ENCODE measurements at regions of chr9 and their contacts with region 1.

Region 1: GRCh38 chr9:70668751-70669150 is 254.3 kb upstream of the KLF9 start:
- DNase-seq: no peak
- H3K4me3 ChIP-seq: no peak overlapping the region
- H3K27ac ChIP-seq: no peak overlapping the region
- H3K4me1 ChIP-seq: no peaks in the 10 kb centered on the region
- H3K27me3 ChIP-seq: no peaks in the 10 kb centered on the region
- CTCF ChIP-seq: no peak

Region 2: DNA sequence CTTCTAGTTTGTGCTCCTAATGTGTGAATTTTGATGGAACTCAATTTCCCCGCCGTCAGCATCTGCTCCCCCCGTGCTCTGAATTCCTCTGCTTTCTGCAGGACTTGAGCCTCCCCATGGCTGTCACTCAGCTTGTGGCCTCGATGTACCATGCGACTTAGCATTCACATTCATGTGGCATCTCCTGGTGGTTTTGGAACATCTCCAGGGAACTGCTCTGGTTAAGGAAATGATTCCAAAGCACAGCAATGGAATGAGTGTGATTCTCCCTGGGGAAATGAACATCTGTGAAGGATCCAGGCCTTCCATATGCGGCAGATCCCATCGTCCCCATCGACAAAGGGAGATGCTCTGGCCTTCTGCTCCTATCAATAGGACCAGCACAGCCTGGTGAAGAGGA is 1224.7 kb before region 1 on chr9:
- CTCF ChIA-PET with region 1: no interaction called
- POLR2A ChIA-PET with region 1: no interaction called
- intact Hi-C with region 1: no loop called
- DNase-seq: no peak
- H3K4me3 ChIP-seq: no peak overlapping the region
- H3K27ac ChIP-seq: no peak overlapping the region
- H3K4me1 ChIP-seq: no peaks in the 10 kb centered on the region; the same call in 1 of the 2 replicates
- H3K27me3 ChIP-seq: no peaks in the 10 kb centered on the region
- CTCF ChIP-seq: no peak

Region 3: GRCh38 chr9:69672596-69673310 is 996.0 kb before region 1 on chr9:
- CTCF ChIA-PET with region 1: no interaction called
- POLR2A ChIA-PET with region 1: no interaction called
- intact Hi-C with region 1: no loop called
- DNase-seq: peak; percentile 73 to 80
- H3K4me3 ChIP-seq: peak overlapping the region; percentile 76
- H3K27ac ChIP-seq: no peak overlapping the region
- H3K4me1 ChIP-seq: peaks cover 32% of the 10 kb centered on the region
- H3K27me3 ChIP-seq: no peaks in the 10 kb centered on the region
- CTCF ChIP-seq: peak; percentile 84

Region 4: DNA sequence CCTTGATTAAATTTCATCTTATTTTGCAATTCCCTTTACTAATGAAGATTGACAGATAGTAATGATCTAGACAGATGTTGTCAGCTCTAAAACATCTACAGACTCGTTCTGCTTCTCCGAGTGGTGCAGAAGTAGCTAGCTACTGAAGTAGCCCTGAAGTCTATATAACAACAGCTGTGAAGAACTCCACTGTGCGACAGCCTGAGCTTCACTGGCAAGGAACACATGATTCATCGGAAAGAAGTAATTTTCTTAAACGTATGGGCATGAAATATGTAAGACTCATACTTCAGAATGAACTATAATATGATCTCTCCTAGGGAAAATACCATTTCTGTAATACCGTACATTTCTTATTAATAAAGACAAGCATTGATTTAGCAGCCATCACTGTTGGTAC is 356.4 kb after region 1 on chr9:
- CTCF ChIA-PET with region 1: no interaction called
- POLR2A ChIA-PET with region 1: interaction called, 16 read pairs
- intact Hi-C with region 1: no loop called
- DNase-seq: no peak
- H3K4me3 ChIP-seq: no peak overlapping the region
- H3K27ac ChIP-seq: no peak overlapping the region
- H3K4me1 ChIP-seq: no peaks in the 10 kb centered on the region
- H3K27me3 ChIP-seq: no peaks in the 10 kb centered on the region
- CTCF ChIP-seq: no peak